ENCODE measurements at regions of chr2 and their contacts with region 1.

Region 1: GRCh38 chr2:227376911-227377396 is 2.2 kb downstream of the TM4SF20 start:
- DNase-seq: no peak
- H3K4me3 Mint-ChIP-seq: no peak overlapping the region
- H3K27ac Mint-ChIP-seq: no peak overlapping the region
- H3K4me1 Mint-ChIP-seq: peaks cover 9% of the 10 kb centered on the region
- H3K27me3 Mint-ChIP-seq: peaks cover 2% of the 10 kb centered on the region

Region 2: GRCh38 chr2:227388537-227389011 is 11.6 kb after region 1 on chr2:
- CTCF ChIA-PET with region 1: interaction called, 9 read pairs
- POLR2A ChIA-PET with region 1: no interaction called
- intact Hi-C with region 1: loop called (anchors 1 kb)
- DNase-seq: no peak
- H3K4me3 Mint-ChIP-seq: no peak overlapping the region
- H3K27ac Mint-ChIP-seq: no peak overlapping the region
- H3K4me1 Mint-ChIP-seq: peaks cover 9% of the 10 kb centered on the region
- H3K27me3 Mint-ChIP-seq: no peaks in the 10 kb centered on the region